GM10248 (cell line): ENCODE measurements at regions of chr9 and their contacts with region 1.

Region 1: DNA sequence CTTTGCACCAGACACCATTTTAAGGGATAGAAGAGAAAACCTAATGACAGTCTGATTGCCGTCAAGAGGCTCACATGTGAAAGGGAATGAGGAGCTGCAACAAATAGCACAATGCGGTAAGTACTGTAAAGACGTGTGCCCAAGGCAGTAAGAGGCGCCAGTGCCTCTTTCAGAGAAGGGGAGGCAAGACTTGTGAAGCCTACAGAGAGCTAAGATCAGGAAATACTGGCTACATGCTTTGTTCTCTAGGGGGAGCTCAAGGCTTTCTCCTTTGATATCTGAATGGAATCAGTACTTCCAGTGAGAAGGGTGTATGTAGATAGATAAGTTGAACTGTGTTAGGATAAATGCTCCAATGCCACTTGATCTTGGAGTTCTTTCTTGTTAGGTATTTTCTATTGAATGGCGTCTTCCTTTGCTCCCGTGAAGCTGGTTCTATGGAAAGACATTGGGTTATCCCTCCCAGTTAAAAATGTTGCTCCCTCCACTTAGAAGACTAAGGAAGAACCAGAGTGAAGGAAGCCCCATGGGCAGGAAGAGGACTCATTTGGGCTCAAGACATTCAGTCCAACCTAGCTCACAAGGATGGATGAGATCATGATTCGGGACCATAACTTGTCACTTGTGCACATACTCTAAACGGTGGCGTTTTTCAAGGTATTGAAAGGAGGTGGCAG is 23.5 kb upstream of the ALDOB start:
- DNase-seq: peak; percentile 57
- CTCF ChIP-seq: peak; percentile 51

Region 2: GRCh38 chr9:101158361-101158760 is 300.7 kb before region 1 on chr9:
- CTCF ChIA-PET with region 1: no interaction called
- POLR2A ChIA-PET with region 1: no interaction called
- DNase-seq: no peak
- CTCF ChIP-seq: no peak

Region 3: DNA sequence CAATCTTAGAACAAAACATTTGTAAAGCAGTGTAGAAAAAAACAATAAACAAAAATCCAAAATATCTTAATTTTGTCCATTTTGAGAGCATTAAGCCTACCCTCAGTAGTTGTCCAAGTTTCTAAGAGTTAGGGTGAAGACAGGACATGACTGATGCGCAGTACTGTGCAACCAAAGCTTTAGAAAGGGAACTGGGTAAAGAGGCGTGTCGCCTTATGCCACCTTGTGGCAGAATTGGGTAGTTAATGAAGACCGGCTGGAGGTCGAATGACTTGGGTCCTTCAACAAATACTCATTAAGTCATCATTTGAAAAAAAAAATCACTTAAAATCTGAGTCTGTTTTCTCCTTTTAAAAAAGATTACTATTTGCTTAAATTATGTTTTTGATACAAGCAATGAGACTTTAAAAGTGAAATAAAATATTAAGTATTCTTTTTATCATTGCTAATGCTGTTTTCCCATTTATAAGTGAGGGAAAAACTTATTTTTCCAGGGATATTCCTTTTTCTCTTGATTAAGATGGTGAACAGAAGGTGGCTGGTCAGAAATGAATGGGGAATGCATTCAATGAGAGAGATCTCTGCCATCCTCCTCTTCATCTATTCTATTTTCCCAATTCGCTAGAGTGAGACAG is 71.1 kb after region 1 on chr9:
- CTCF ChIA-PET with region 1: interaction called, 49 read pairs
- POLR2A ChIA-PET with region 1: no interaction called
- DNase-seq: peak; percentile 70
- CTCF ChIP-seq: peak; percentile 77